Astrocyte of the cerebellum (primary cell): ENCODE measurements at regions of chr6 and their contacts with region 1.

Region 1: GRCh38 chr6:121430514-121431460 is 4.7 kb upstream of the GJA1 start:
- DNase-seq: no peak
- H3K4me3 ChIP-seq: no peak overlapping the region
- CTCF ChIP-seq: peak; percentile 49

Region 2: DNA sequence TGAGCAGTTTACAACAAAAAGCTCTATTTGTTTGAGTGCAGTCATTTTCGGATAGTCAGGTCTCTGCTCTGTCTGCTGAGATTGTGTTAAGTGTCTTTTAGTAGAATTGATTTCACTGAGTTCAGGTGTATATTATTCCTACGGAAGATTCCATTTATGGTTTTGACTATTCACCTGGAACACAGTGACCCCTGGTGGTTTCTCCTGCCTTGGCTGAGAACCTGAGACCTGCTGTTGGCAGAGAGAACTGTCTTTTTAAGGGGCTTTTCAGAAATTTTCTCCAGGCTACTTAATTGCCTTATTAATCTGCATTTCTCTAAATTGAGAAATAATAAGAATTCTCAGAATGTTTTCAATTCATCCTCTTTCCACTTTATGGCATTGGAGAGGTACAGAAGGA is 604.5 kb before region 1 on chr6:
- in situ Hi-C with region 1: no loop called
- DNase-seq: no peak
- H3K4me3 ChIP-seq: no peak overlapping the region
- CTCF ChIP-seq: peak; percentile 74

Region 3: GRCh38 chr6:121205569-121205968 is 225.2 kb before region 1 on chr6:
- in situ Hi-C with region 1: no loop called
- DNase-seq: no peak
- H3K4me3 ChIP-seq: no peak overlapping the region
- CTCF ChIP-seq: no peak

Region 4: GRCh38 chr6:121465101-121465500 is 34.3 kb after region 1 on chr6:
- in situ Hi-C with region 1: no loop called
- DNase-seq: no peak
- H3K4me3 ChIP-seq: no peak overlapping the region
- CTCF ChIP-seq: no peak

Region 5: DNA sequence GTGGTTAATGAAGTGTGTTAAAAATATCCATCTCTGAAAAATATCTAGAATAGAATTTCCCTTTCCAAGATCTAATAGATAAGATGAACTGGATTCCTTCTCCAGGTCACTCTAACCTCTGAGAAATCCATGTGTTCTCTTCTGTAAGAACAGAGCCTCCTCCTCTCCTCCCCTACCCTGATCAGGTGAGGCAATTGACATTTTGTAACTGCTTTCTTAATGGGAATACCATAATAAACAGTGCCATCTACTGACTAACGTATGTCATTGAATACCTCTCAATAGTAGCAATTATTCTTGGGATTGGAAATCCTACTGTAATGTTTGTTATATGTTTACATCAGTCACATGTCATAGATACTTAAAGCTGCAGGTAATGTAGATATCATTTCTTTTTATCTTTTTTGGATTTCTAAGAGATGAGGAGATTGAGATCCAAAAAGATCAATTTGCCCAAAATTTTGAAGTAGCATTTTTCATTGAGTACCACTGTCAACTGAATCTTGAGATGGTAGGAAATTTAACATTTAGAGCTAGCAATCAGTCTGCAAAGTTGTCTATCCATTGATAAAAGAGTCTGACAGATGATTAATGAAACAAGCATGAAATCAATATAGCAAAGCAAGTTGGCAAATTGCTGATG is 602.9 kb after region 1 on chr6:
- in situ Hi-C with region 1: loop called (anchors 5 kb)
- DNase-seq: peak; percentile 55
- H3K4me3 ChIP-seq: no peak overlapping the region
- CTCF ChIP-seq: peak; percentile 43

Region 6: GRCh38 chr6:122187186-122187585 is 756.4 kb after region 1 on chr6:
- in situ Hi-C with region 1: loop called (anchors 5 kb)
- DNase-seq: no peak
- H3K4me3 ChIP-seq: no peak overlapping the region
- CTCF ChIP-seq: no peak